Activated CD4-positive, alpha-beta memory T cell treated with anti-CD3 and anti-CD28 coated beads for 36 hours (primary cell): ENCODE measurements at regions of chr4 and their contacts with region 1.

Region 1: GRCh38 chr4:2241410-2242353 is at the starts of genes HAUS3 and POLN:
- DNase-seq: peak; percentile 100
- H3K4me3 Mint-ChIP-seq: peak within 1 kb of the TSS; percentile 97
- H3K27ac Mint-ChIP-seq: peak within 1 kb of the TSS; percentile 89
- H3K4me1 Mint-ChIP-seq: peaks cover 54% of the 10 kb centered on the region
- H3K27me3 Mint-ChIP-seq: no peaks in the 10 kb centered on the region
- total RNA-seq, gene HAUS3: 20.2 to 20.3 TPM
- total RNA-seq, gene POLN: 2.7 to 4.0 TPM

Region 2: GRCh38 chr4:1870578-1871443 is 370.9 kb before region 1 on chr4 and contains the start of gene NSD2:
- CTCF ChIA-PET with region 1: no interaction called
- POLR2A ChIA-PET with region 1: no interaction called
- intact Hi-C with region 1: loop called (anchors 5 kb)
- DNase-seq: peak; percentile 93
- H3K4me3 Mint-ChIP-seq: peak within 1 kb of the TSS; percentile 89
- H3K27ac Mint-ChIP-seq: peak within 1 kb of the TSS; percentile 95
- H3K4me1 Mint-ChIP-seq: peaks cover 33% of the 10 kb centered on the region
- H3K27me3 Mint-ChIP-seq: no peaks in the 10 kb centered on the region
- total RNA-seq, gene NSD2: 197 to 199 TPM

Region 3: GRCh38 chr4:2177443-2178093 is 64.1 kb before region 1 on chr4:
- CTCF ChIA-PET with region 1: no interaction called
- POLR2A ChIA-PET with region 1: no interaction called
- intact Hi-C with region 1: no loop called
- DNase-seq: no peak
- H3K4me3 Mint-ChIP-seq: no peak overlapping the region
- H3K27ac Mint-ChIP-seq: no peak overlapping the region
- H3K4me1 Mint-ChIP-seq: peaks cover 11% of the 10 kb centered on the region
- H3K27me3 Mint-ChIP-seq: no peaks in the 10 kb centered on the region

Region 4: GRCh38 chr4:2220016-2220630 is 21.6 kb before region 1 on chr4:
- CTCF ChIA-PET with region 1: interaction called, 23 read pairs
- POLR2A ChIA-PET with region 1: interaction called, 5 read pairs
- intact Hi-C with region 1: no loop called
- DNase-seq: peak; percentile 84
- H3K4me3 Mint-ChIP-seq: no peak overlapping the region
- H3K27ac Mint-ChIP-seq: no peak overlapping the region
- H3K4me1 Mint-ChIP-seq: peaks cover 5% of the 10 kb centered on the region
- H3K27me3 Mint-ChIP-seq: no peaks in the 10 kb centered on the region

Region 5: DNA sequence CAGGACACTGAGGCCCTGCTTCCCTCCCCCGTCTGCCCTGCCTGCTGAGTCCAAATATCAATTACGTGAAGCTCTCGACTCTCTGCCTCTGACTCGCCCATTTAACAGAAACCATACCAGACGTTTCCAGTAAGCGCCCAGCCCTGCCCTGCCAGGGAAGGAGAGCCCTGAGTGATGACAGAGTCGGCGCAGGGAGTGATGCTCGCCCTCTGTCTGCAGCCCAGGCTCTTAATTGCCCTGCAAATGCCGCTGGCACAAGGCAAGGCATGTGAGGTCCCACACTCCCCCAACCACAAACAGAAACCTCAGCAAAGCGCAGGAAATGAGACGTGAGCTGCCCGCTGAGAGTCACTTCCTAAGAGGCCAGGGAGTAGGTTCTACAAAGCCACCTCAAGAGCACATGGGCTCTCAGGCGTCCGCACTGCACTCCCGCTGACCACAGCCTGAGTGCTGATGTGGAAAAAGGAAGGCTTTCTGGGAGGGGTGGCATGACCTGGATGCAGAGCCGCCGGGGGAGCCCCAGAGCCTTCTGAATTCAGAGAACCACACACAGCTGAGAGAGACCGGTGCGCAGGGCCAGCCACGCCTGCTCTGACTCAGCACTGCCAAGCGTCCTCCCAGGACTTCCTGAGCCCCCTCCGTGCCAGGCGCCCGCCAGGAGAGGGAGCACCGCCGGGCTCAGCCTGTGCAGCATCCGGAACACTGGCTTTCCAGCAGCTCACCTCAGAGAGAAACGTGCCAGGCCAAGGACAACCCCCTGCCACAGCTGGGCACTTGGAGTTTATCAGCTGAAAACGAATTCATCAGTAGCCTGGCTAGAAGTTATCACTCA is 171.4 kb after region 1 on chr4:
- CTCF ChIA-PET with region 1: interaction called, 7 read pairs
- POLR2A ChIA-PET with region 1: interaction called, 8 read pairs
- intact Hi-C with region 1: loop called (anchors 1 kb)
- DNase-seq: peak; percentile 96
- H3K4me3 Mint-ChIP-seq: peak overlapping the region; percentile 66
- H3K27ac Mint-ChIP-seq: peak overlapping the region; percentile 97
- H3K4me1 Mint-ChIP-seq: peaks cover 63% of the 10 kb centered on the region
- H3K27me3 Mint-ChIP-seq: no peaks in the 10 kb centered on the region

Region 6: DNA sequence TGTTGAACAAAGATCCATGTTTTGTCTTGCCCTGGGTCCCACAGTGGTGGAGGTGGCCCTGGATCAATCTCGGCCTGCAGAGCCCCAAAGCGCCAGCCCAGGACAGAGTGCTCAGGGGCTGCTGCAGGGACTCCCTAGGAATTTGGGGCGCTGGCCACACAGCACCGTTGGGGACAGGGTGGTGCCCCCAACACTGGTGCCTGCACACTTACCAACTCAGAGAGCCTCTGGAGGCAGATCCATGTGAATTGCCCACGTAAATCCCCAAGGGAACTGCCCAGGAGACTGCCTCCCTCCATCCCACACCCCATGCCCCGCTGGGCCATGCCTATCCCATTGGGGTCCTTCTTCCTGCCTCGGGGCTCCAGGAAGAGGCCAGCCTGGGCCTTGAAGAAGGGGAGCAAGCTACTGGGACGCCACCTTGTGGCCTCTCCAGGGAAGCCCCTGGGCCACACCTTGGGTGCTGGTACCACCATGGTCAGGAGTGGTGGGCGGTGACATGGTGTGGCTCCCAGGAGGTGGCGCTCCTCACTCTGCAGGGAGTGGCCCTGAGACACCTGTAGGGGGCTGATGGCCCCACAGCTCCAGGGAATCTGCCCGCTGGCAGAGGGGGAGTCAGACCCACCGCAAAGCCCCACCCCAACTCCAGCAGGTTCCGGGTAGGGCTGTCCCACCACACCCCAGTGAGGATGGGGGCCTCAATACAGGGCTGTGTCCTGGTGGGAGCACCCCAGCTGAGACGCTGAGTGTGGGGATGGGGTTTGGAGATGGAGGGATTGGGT is 199.9 kb after region 1 on chr4:
- CTCF ChIA-PET with region 1: interaction called, 8 read pairs
- POLR2A ChIA-PET with region 1: no interaction called
- intact Hi-C with region 1: loop called (anchors 1 kb)
- DNase-seq: peak; percentile 90
- H3K4me3 Mint-ChIP-seq: no peak overlapping the region
- H3K27ac Mint-ChIP-seq: no peak overlapping the region
- H3K4me1 Mint-ChIP-seq: peaks cover 4% of the 10 kb centered on the region
- H3K27me3 Mint-ChIP-seq: no peaks in the 10 kb centered on the region

Region 7: GRCh38 chr4:2536193-2537010 is 294.7 kb after region 1 on chr4 and contains the start of gene FAM193A:
- CTCF ChIA-PET with region 1: no interaction called
- POLR2A ChIA-PET with region 1: no interaction called
- intact Hi-C with region 1: loop called (anchors 10 kb)
- DNase-seq: peak; percentile 100
- H3K4me3 Mint-ChIP-seq: peak within 1 kb of the TSS; percentile 87
- H3K27ac Mint-ChIP-seq: peak within 1 kb of the TSS; percentile 86
- H3K4me1 Mint-ChIP-seq: peaks cover 20% of the 10 kb centered on the region
- H3K27me3 Mint-ChIP-seq: no peaks in the 10 kb centered on the region
- total RNA-seq, gene FAM193A: 21.7 to 22.6 TPM